Naive thymus-derived CD4-positive, alpha-beta T cell (primary cell): ENCODE measurements at regions of chrX and their contacts with region 1.

Region 1: DNA sequence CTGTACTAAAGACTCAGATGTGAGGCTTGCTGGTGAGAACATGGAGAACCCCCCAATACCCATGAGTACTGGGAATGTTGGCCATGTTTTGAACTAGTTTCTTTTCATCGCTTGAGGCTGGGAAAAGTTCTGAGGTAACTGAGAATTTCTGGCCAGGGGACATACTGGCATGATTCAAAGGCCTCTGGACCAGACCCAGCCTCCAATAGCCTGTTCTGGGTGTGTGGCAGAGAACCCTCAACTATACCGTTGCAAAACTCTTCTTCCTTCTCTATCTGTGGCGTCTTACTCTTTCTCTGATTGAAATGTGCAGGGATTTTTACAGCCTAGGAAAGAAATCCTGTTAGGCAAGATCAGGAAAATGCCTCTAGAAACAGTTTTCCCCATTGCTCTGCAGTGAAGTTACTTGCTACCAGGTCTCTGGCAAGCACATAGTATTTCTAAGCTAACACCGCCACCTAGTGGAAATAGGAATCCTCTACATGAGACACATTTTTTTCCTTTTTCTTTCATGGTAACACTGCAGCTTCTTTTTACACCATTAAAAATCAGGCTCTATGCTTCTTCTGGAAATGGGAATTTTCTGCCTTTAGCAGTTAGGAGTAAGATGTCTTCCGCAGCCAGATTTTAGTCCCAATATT is 170.7 kb upstream of the ZCCHC13 start:
- DNase-seq: peak in 7 of 9 donors; percentile 31 to 72 (median 61)
- ATAC-seq: peak; percentile 50
- H3K4me3 ChIP-seq: no peak overlapping the region
- H3K4me3 Mint-ChIP-seq: no peak overlapping the region
- H3K27ac ChIP-seq: no peak overlapping the region
- H3K27ac Mint-ChIP-seq: no peak overlapping the region
- H3K4me1 ChIP-seq: no peaks in the 10 kb centered on the region
- H3K4me1 Mint-ChIP-seq: no peaks in the 10 kb centered on the region
- H3K27me3 ChIP-seq: no peaks in the 10 kb centered on the region
- H3K27me3 Mint-ChIP-seq: no peaks in the 10 kb centered on the region

Region 2: DNA sequence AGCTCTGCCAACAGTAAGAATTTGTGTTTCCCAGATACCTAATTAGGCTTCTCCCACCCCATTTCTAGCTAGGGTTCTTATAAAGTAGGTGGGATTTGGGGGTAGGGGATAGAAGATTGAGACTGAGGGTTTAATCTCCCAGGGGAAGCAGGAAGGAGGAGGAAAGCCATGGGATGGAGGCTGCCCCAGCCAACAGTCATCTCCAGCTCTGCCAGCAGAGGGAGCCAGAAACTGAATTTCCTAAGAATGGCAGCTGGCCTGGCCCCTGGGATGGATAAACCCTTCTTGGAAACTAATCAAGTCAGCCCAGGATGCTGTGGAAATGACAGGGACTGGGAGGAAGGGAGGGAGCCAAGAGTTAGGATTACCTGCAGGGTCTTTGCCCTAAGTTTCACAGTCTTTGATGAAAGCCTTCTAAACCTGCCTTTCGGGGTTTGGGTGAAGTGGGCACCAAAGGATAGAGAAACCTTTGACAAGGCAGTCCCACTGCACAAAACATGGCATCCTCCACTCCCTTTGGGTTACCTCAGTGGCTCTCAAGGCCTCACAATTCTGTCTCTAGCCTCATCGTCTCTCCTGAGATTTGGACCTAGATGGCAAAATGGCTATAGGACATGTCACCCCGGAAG is 1887.7 kb before region 1 on chrX:
- CTCF ChIA-PET with region 1: no interaction called
- POLR2A ChIA-PET with region 1: no interaction called
- intact Hi-C with region 1: loop called in 1 of 2 experiments (anchors 10 kb)
- DNase-seq: peak in 6 of 9 donors; percentile 5 to 42 (median 18)
- ATAC-seq: no peak
- H3K4me3 ChIP-seq: no peak overlapping the region
- H3K4me3 Mint-ChIP-seq: no peak overlapping the region
- H3K27ac ChIP-seq: no peak overlapping the region
- H3K27ac Mint-ChIP-seq: no peak overlapping the region
- H3K4me1 ChIP-seq: no peaks in the 10 kb centered on the region
- H3K4me1 Mint-ChIP-seq: peaks cover 0 to 2% (median 0%) of the 10 kb centered on the region in 7 donors
- H3K27me3 ChIP-seq: no peaks in the 10 kb centered on the region
- H3K27me3 Mint-ChIP-seq: no peaks in the 10 kb centered on the region

Region 3: GRCh38 chrX:73076838-73077237 is 1056.4 kb before region 1 on chrX:
- CTCF ChIA-PET with region 1: no interaction called
- POLR2A ChIA-PET with region 1: no interaction called
- intact Hi-C with region 1: loop called in 1 of 2 experiments (anchors 10 kb)
- DNase-seq: no peak
- ATAC-seq: no peak
- H3K4me3 ChIP-seq: no peak overlapping the region
- H3K4me3 Mint-ChIP-seq: no peak overlapping the region
- H3K27ac ChIP-seq: no peak overlapping the region
- H3K27ac Mint-ChIP-seq: no peak overlapping the region
- H3K4me1 ChIP-seq: no peaks in the 10 kb centered on the region
- H3K4me1 Mint-ChIP-seq: no peaks in the 10 kb centered on the region
- H3K27me3 ChIP-seq: no peaks in the 10 kb centered on the region
- H3K27me3 Mint-ChIP-seq: peaks cover 9 to 25% (median 20%) of the 10 kb centered on the region in 5 donors

Region 4: GRCh38 chrX:73855546-73855945 is 277.7 kb before region 1 on chrX:
- CTCF ChIA-PET with region 1: interaction called, 4 read pairs
- POLR2A ChIA-PET with region 1: no interaction called
- intact Hi-C with region 1: loop called (anchors 1 kb)
- DNase-seq: peak; percentile 11 to 81 (median 59)
- ATAC-seq: peak; percentile 64
- H3K4me3 ChIP-seq: no peak overlapping the region
- H3K4me3 Mint-ChIP-seq: no peak overlapping the region
- H3K27ac ChIP-seq: no peak overlapping the region
- H3K27ac Mint-ChIP-seq: no peak overlapping the region
- H3K4me1 ChIP-seq: no peaks in the 10 kb centered on the region
- H3K4me1 Mint-ChIP-seq: peaks cover 0 to 4% (median 0%) of the 10 kb centered on the region in 7 donors
- H3K27me3 ChIP-seq: no peaks in the 10 kb centered on the region
- H3K27me3 Mint-ChIP-seq: no peaks in the 10 kb centered on the region

Region 5: GRCh38 chrX:74015379-74016019 is 117.8 kb before region 1 on chrX:
- CTCF ChIA-PET with region 1: no interaction called
- POLR2A ChIA-PET with region 1: no interaction called
- intact Hi-C with region 1: loop called (anchors 1 to 2 kb)
- DNase-seq: peak; percentile 12 to 81 (median 55)
- ATAC-seq: peak; percentile 77
- H3K4me3 ChIP-seq: no peak overlapping the region
- H3K4me3 Mint-ChIP-seq: no peak overlapping the region
- H3K27ac ChIP-seq: no peak overlapping the region
- H3K27ac Mint-ChIP-seq: peak overlapping the region in 2 of 9 donors; percentile 18 to 37
- H3K4me1 ChIP-seq: no peaks in the 10 kb centered on the region
- H3K4me1 Mint-ChIP-seq: peaks cover 0 to 7% (median 3%) of the 10 kb centered on the region in 7 donors
- H3K27me3 ChIP-seq: no peaks in the 10 kb centered on the region
- H3K27me3 Mint-ChIP-seq: no peaks in the 10 kb centered on the region

Region 6: GRCh38 chrX:74343343-74344279 is 210.3 kb after region 1 on chrX:
- CTCF ChIA-PET with region 1: no interaction called
- POLR2A ChIA-PET with region 1: no interaction called
- intact Hi-C with region 1: loop called (anchors 1 to 10 kb)
- DNase-seq: peak in 8 of 9 donors; percentile 17 to 59 (median 44)
- ATAC-seq: peak; percentile 82
- H3K4me3 ChIP-seq: no peak overlapping the region
- H3K4me3 Mint-ChIP-seq: no peak overlapping the region
- H3K27ac ChIP-seq: no peak overlapping the region
- H3K27ac Mint-ChIP-seq: peak overlapping the region in 1 of 9 donors; percentile 37
- H3K4me1 ChIP-seq: no peaks in the 10 kb centered on the region
- H3K4me1 Mint-ChIP-seq: peaks cover 0 to 5% (median 3%) of the 10 kb centered on the region in 7 donors
- H3K27me3 ChIP-seq: no peaks in the 10 kb centered on the region
- H3K27me3 Mint-ChIP-seq: peaks cover 0 to 4% (median 4%) of the 10 kb centered on the region in 5 donors